ENCODE measurements at regions of chr1 and their contacts with region 1.

Region 1: DNA sequence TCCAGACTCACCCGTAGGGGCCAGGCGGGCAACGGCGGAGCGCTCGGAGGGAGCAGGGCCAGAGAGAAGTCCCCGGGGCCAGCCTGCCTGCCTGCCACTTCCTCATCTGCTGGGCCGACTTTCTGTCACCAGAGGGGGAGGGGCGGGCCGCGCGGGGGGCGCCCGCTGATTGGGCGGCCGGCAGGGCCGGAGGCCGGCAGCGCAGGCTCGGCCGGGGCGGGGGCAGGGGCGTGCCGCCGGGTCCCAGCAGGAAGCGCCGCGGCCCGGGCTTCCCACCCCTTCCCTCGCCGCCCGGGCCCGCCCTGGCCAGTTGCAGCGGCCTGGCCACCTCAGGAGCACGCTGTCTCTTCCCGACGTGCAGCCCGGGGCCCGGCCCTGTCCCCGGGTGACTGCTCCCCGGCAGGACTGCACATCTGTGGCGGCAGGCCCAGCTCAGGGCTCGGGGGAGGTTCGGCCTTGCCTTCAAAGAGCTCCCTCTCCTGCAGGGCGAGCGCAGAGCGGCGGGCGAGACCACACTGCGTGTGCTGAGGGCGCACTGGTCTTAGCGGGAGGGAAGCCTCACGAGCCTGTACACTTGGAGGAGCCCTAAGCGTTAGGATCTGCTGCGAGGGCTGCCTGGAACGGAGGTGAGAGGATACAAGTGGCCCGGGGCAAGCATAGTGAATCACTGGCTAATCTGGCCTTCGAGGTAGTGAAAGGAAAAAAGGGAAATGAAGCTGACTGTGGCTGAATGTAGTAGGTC is at the start of gene ELOVL1:
- DNase-seq: peak; percentile 80
- ATAC-seq: peak; percentile 93
- H3K4me3 ChIP-seq: peak within 1 kb of the TSS; percentile 80
- H3K27ac ChIP-seq: peak within 1 kb of the TSS; percentile 93
- H3K4me1 ChIP-seq: peaks cover 16% of the 10 kb centered on the region
- H3K27me3 ChIP-seq: no peaks in the 10 kb centered on the region
- CTCF ChIP-seq: peak; percentile 34
- POLR2A ChIP-seq: peak; percentile 67; the same call in 1 of the 2 replicates
- RAD21 ChIP-seq: peak; percentile 1; the same call in 1 of the 2 replicates
- total RNA-seq, gene ELOVL1: 66.4 and 88.9 TPM in 2 replicates

Region 2: DNA sequence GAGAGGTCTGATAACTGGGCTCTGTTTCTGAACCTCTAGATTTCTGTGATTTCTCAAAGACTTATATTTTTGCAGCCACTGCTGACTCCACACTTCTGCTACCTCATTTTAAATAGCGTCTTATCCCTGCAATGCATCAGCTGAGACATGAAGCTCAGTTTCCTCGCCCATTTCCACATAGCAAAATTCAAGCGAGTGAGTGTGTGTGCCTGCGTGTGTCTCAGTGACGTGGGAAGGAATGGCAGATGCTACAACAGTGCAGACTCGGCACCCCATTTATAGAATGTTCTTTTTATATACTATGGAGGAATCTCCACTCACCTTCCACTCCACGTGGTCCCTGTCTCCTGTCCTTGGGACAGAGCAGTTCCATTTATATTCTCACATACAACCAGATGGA is 948.0 kb before region 1 on chr1:
- CTCF ChIA-PET with region 1: no interaction called
- POLR2A ChIA-PET with region 1: interaction called, 14 read pairs
- dilution Hi-C with region 1: no loop called
- in situ Hi-C with region 1: no loop called
- intact Hi-C with region 1: no loop called
- DNase-seq: no peak
- ATAC-seq: no peak
- H3K4me3 ChIP-seq: no peak overlapping the region
- H3K27ac ChIP-seq: no peak overlapping the region
- H3K4me1 ChIP-seq: peaks cover 3% of the 10 kb centered on the region; the same call in 1 of the 2 replicates
- H3K27me3 ChIP-seq: peaks cover 41% of the 10 kb centered on the region
- CTCF ChIP-seq: no peak
- POLR2A ChIP-seq: no peak
- RAD21 ChIP-seq: no peak

Region 3: GRCh38 chr1:43137445-43138052 is 230.5 kb before region 1 on chr1:
- CTCF ChIA-PET with region 1: no interaction called
- POLR2A ChIA-PET with region 1: no interaction called
- dilution Hi-C with region 1: no loop called
- in situ Hi-C with region 1: no loop called
- intact Hi-C with region 1: no loop called
- DNase-seq: no peak
- ATAC-seq: no peak
- H3K4me3 ChIP-seq: no peak overlapping the region
- H3K27ac ChIP-seq: no peak overlapping the region
- H3K4me1 ChIP-seq: no peaks in the 10 kb centered on the region
- H3K27me3 ChIP-seq: peaks cover 4% of the 10 kb centered on the region
- CTCF ChIP-seq: no peak
- POLR2A ChIP-seq: no peak
- RAD21 ChIP-seq: no peak

Region 4: GRCh38 chr1:43389326-43390313 is 21.5 kb after region 1 on chr1 and contains the starts of genes MED8 and SZT2:
- CTCF ChIA-PET with region 1: no interaction called
- POLR2A ChIA-PET with region 1: no interaction called
- dilution Hi-C with region 1: no loop called
- in situ Hi-C with region 1: no loop called
- intact Hi-C with region 1: loop called (anchors 1 kb)
- DNase-seq: peak; percentile 92
- ATAC-seq: peak; percentile 96
- H3K4me3 ChIP-seq: peak within 1 kb of the TSS; percentile 92
- H3K27ac ChIP-seq: peak within 1 kb of the TSS; percentile 97
- H3K4me1 ChIP-seq: peaks cover 8% of the 10 kb centered on the region
- H3K27me3 ChIP-seq: no peaks in the 10 kb centered on the region
- CTCF ChIP-seq: no peak
- POLR2A ChIP-seq: peak; percentile 88
- RAD21 ChIP-seq: no peak
- total RNA-seq, gene MED8: 114 and 120 TPM in 2 replicates
- total RNA-seq, gene SZT2: 9.5 and 9.7 TPM in 2 replicates